SK-N-SH (cell line): ENCODE measurements at regions of chr10 and their contacts with region 1.

Region 1: DNA sequence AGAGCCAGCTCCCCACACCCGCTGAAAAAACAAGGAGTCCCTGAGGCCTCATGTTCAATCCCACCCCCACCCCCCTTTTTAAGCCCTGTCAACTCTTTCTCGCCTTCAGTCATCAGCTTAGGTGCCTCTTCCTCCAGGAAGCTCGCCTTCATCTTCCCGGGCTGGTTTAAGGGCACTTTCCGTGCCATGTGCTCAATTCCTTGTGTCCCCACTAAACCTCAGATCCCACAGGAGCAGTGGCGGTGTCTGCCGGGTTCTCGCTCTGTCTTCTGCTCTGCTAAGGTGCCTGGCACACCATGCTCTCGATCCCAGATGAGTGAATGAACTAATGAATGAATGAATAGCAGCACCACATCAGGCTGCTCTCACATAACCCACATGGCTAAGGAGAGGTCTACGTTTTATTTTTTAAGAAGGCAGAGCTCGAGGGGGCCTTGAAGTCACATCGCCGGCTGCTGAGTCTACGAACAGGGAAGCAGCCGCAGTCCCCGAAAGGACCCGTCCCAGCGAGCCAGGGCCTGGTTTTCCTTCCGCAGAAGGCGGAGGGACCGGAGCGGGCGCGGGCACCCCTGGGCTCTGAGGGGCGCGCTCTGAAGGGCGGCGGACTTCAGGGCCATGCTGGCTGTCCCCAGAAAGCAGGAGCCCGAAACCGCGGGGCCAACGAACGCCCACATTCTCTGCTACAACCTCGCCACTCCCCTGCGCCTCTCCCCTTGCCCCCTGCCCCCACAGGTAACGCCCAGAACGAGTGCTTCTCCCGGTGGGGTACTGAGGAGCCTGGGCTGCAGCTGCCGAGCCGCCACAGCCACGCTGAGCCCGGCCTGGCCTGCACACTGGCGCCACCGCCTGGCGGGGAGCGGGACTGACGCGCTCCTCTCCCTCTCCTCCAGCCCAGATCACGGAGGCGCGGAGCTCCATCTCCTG is 73.4 kb upstream of the KCNMA1 start:
- DNase-seq: peak; percentile 90
- H3K4me3 ChIP-seq: no peak overlapping the region; a peak in 1 of 4 replicates
- H3K27ac ChIP-seq: no peak overlapping the region
- H3K4me1 ChIP-seq: peaks cover 4 to 8% of the 10 kb centered on the region in 2 experiments; a peak in 1 of 4 replicates
- H3K27me3 ChIP-seq: no peaks in the 10 kb centered on the region
- CTCF ChIP-seq: peak; percentile 86
- EP300 ChIP-seq: no peak
- RAD21 ChIP-seq: peak; percentile 75

Region 2: GRCh38 chr10:77641788-77642397 is 69.1 kb before region 1 on chr10:
- CTCF ChIA-PET with region 1: interaction called, 14 read pairs
- POLR2A ChIA-PET with region 1: no interaction called
- DNase-seq: peak; percentile 72
- H3K4me3 ChIP-seq: no peak overlapping the region; a peak in 1 of 4 replicates
- H3K27ac ChIP-seq: no peak overlapping the region
- H3K4me1 ChIP-seq: peaks cover 0 to 10% of the 10 kb centered on the region in 2 experiments; a peak in 2 of 4 replicates
- H3K27me3 ChIP-seq: no peaks in the 10 kb centered on the region
- CTCF ChIP-seq: peak; percentile 90
- EP300 ChIP-seq: no peak
- RAD21 ChIP-seq: peak; percentile 99

Region 3: DNA sequence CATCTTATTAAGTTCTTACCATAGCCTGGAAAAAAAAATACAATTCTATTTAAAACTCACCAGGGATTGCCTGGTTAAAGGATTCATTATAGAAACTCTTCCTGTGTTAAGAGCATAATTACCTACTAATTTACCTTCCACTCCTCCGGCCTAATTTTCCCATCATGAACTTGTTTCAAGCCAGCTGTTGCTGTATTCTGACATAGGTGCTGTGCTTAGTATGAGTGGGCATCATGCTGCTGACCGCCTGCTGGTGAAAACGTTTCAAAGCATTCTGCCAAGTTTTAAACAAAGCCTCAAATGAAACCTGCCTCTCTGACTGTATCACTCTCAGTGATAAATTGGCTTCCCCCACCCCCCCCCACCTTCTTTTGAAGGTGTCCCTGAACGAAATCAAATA is 25.6 kb before region 1 on chr10:
- CTCF ChIA-PET with region 1: interaction called, 23 read pairs
- POLR2A ChIA-PET with region 1: no interaction called
- DNase-seq: no peak
- H3K4me3 ChIP-seq: no peak overlapping the region
- H3K27ac ChIP-seq: no peak overlapping the region
- H3K4me1 ChIP-seq: no peaks in the 10 kb centered on the region; a peak in 1 of 4 replicates
- H3K27me3 ChIP-seq: peaks cover 16% of the 10 kb centered on the region; the same call in 1 of the 2 replicates
- CTCF ChIP-seq: no peak
- EP300 ChIP-seq: no peak
- RAD21 ChIP-seq: no peak

Region 4: GRCh38 chr10:77721815-77722214 is 10.8 kb after region 1 on chr10:
- CTCF ChIA-PET with region 1: interaction called, 13 read pairs
- POLR2A ChIA-PET with region 1: no interaction called
- DNase-seq: no peak
- H3K4me3 ChIP-seq: no peak overlapping the region
- H3K27ac ChIP-seq: no peak overlapping the region
- H3K4me1 ChIP-seq: peaks cover 3 to 11% of the 10 kb centered on the region in 2 experiments; a peak in 3 of 4 replicates
- H3K27me3 ChIP-seq: no peaks in the 10 kb centered on the region
- CTCF ChIP-seq: no peak
- EP300 ChIP-seq: no peak
- RAD21 ChIP-seq: no peak